Adrenal gland (tissue), 19 donors: ENCODE measurements at regions of chr18 and their contacts with region 1.

Region 1: DNA sequence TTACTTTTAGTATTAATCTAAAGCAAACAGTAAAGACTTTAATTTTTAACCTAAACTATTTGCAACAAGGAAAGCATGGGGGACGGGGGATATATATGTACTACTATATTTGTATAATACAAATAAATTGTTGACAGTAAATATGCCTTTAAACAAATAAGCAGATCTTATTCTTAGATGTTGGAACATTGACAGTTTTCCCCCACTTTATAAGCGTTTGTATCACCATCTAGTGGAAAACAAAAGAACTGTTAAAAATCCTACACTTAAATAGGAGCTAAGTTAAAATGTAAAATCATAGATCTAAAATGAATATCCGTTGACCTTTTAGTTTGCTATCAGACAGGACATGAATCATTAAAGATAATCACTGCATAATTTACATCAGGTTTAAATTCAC is 50.0 kb downstream of the RBBP8 start:
- DNase-seq: no peak
- H3K4me3 ChIP-seq: no peak overlapping the region
- H3K27ac ChIP-seq: no peak overlapping the region
- H3K4me1 ChIP-seq: no peaks in the 10 kb centered on the region
- H3K27me3 ChIP-seq: no peaks in the 10 kb centered on the region
- CTCF ChIP-seq: peak; percentile 48 to 81 (median 64)
- POLR2A ChIP-seq: no peak

Region 2: DNA sequence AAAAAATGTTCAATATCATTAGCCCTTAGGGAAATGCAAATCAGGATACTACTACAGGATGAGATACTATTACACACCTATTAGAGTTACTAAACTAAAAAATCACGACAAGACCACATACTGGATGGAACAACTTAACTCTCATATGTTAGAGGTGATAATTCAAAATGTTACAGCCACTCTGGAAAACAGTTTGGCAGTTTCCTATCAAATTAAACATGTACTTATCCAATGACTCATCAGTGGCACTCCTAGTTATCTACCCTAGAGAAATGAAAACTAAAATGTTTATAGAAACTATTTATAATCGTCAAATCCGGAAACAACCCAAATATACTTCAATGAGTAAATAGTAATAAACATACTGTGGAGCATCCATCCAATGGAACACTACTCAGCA is 187.1 kb before region 1 on chr18:
- intact Hi-C with region 1: loop called in 1 of 2 experiments (anchors 5 kb)
- DNase-seq: no peak
- H3K4me3 ChIP-seq: no peak overlapping the region
- H3K27ac ChIP-seq: no peak overlapping the region
- H3K4me1 ChIP-seq: peaks cover 6 to 10% of the 10 kb centered on the region in 2 donors
- H3K27me3 ChIP-seq: no peaks in the 10 kb centered on the region
- CTCF ChIP-seq: no peak
- POLR2A ChIP-seq: no peak

Region 3: GRCh38 chr18:22933206-22933957 is 49.8 kb before region 1 on chr18 and contains the start of gene RBBP8:
- intact Hi-C with region 1: loop called (anchors 5 to 10 kb)
- DNase-seq: peak; percentile 76 to 89 (median 82)
- H3K4me3 ChIP-seq: peak within 1 kb of the TSS; percentile 73 to 86 (median 82)
- H3K27ac ChIP-seq: peak within 1 kb of the TSS; percentile 73 to 99 (median 96)
- H3K4me1 ChIP-seq: peaks cover 0 to 7% of the 10 kb centered on the region in 2 donors
- H3K27me3 ChIP-seq: no peaks in the 10 kb centered on the region
- CTCF ChIP-seq: no peak
- POLR2A ChIP-seq: peak; percentile 54 to 88
- total RNA-seq, gene RBBP8: 8.0 to 27.6 (median 14.9) TPM